Endothelial cell of umbilical vein (primary cell): ENCODE measurements at regions of chr20 and their contacts with region 1.

Region 1: GRCh38 chr20:6178537-6178936 is 55.7 kb upstream of the FERMT1 start:
- DNase-seq: peak; percentile 67
- H3K4me3 ChIP-seq: no peak overlapping the region
- H3K27ac ChIP-seq: no peak overlapping the region
- H3K4me1 ChIP-seq: no peaks in the 10 kb centered on the region
- H3K27me3 ChIP-seq: peaks cover 0 to 2% of the 10 kb centered on the region in 2 experiments
- CTCF ChIP-seq: peak; percentile 29 to 36
- POLR2A ChIP-seq: no peak

Region 2: DNA sequence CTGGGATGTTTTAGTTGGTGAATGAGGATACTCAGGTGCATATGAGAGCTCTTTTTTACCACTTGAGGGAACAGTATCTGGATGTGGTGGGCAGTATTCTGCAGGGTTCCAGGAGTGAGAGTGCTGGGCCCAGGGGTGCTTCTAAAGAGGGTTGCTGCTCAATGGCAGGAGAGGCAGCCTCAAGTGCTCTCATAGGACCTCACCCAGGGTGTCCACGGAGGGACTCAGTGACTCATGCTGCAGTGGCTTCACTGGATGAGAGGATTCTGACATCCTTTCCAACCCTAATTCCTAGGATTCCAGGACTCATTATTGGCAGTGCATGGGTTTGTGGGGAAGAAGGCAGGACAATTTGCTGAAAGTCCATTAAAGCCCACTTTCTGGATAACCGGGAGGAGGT is 120.9 kb after region 1 on chr20:
- CTCF ChIA-PET with region 1: no interaction called
- POLR2A ChIA-PET with region 1: no interaction called
- dilution Hi-C with region 1: no loop called
- intact Hi-C with region 1: no loop called
- DNase-seq: no peak
- H3K4me3 ChIP-seq: no peak overlapping the region
- H3K27ac ChIP-seq: no peak overlapping the region
- H3K4me1 ChIP-seq: no peaks in the 10 kb centered on the region
- H3K27me3 ChIP-seq: no peaks in the 10 kb centered on the region
- CTCF ChIP-seq: no peak
- POLR2A ChIP-seq: no peak

Region 3: GRCh38 chr20:6630514-6630913 is 452.0 kb after region 1 on chr20:
- CTCF ChIA-PET with region 1: no interaction called
- POLR2A ChIA-PET with region 1: no interaction called
- dilution Hi-C with region 1: no loop called
- intact Hi-C with region 1: loop called (anchors 2 kb)
- DNase-seq: peak; percentile 34
- H3K4me3 ChIP-seq: no peak overlapping the region
- H3K27ac ChIP-seq: no peak overlapping the region
- H3K4me1 ChIP-seq: no peaks in the 10 kb centered on the region
- H3K27me3 ChIP-seq: no peaks in the 10 kb centered on the region
- CTCF ChIP-seq: no peak
- POLR2A ChIP-seq: no peak

Region 4: GRCh38 chr20:6819605-6820004 is 641.1 kb after region 1 on chr20:
- CTCF ChIA-PET with region 1: interaction called, 3 read pairs
- POLR2A ChIA-PET with region 1: no interaction called
- dilution Hi-C with region 1: no loop called
- intact Hi-C with region 1: loop called (anchors 2 kb)
- DNase-seq: peak; percentile 46
- H3K4me3 ChIP-seq: no peak overlapping the region
- H3K27ac ChIP-seq: no peak overlapping the region
- H3K4me1 ChIP-seq: no peaks in the 10 kb centered on the region
- H3K27me3 ChIP-seq: peaks cover 0 to 2% of the 10 kb centered on the region in 2 experiments
- CTCF ChIP-seq: peak; percentile 16 to 27
- POLR2A ChIP-seq: no peak